ENCODE measurements at regions of chr20 and their contacts with region 1.

Region 1: DNA sequence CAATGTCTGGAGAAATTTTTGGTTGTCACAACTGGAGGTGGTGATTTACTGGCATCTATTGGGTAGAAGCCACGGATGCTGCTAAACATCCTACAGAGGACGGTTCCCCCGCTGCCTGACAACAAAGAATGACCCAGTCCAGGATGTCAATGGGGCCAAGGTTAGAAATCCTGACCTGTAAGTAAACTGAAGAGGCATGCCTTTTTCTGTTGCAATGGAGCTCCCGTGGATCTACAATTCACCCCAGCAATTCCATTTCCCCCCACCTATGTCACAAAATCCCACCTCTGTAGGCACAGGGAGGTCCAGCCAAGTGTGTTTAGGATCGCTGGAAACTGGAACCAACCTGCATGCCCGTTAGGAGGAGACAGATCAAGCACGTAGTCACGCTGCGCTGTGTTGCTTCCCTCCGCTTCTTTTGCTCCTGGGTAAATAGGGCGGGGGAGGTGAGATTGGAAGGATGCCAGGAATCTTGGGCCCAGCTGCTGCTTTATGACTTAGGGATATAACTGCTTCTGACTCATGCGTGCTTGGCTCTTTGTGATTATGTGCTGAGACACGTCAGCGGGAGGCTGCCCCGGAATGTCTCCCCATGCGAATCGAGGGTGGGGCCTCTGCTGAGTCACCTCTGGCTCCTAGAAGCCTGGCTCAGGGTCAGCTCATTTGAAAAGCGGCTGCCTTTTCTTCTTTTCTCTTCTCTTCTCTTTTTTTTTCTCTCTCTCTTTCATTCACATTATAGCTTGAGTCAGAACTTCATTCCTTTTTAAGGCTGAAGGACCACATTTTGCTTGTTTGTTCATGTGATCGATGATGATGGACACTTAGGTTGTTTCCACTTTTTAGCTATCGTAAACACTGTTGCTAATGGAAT is 12.4 kb upstream of the PEDS1 start:
- DNase-seq: peak; percentile 22 to 80 (median 72)
- ATAC-seq: peak; percentile 90
- H3K4me3 ChIP-seq: peak overlapping the region in 1 of 2 experiments; percentile 3
- H3K4me3 Mint-ChIP-seq: peak overlapping the region; percentile 50
- H3K27ac ChIP-seq: no peak overlapping the region
- H3K27ac Mint-ChIP-seq: no peak overlapping the region
- H3K4me1 ChIP-seq: peaks cover 8% of the 10 kb centered on the region
- H3K4me1 Mint-ChIP-seq: peaks cover 11% of the 10 kb centered on the region
- H3K27me3 ChIP-seq: no peaks in the 10 kb centered on the region
- H3K27me3 Mint-ChIP-seq: peaks cover 5% of the 10 kb centered on the region
- CTCF ChIP-seq: no peak

Region 2: DNA sequence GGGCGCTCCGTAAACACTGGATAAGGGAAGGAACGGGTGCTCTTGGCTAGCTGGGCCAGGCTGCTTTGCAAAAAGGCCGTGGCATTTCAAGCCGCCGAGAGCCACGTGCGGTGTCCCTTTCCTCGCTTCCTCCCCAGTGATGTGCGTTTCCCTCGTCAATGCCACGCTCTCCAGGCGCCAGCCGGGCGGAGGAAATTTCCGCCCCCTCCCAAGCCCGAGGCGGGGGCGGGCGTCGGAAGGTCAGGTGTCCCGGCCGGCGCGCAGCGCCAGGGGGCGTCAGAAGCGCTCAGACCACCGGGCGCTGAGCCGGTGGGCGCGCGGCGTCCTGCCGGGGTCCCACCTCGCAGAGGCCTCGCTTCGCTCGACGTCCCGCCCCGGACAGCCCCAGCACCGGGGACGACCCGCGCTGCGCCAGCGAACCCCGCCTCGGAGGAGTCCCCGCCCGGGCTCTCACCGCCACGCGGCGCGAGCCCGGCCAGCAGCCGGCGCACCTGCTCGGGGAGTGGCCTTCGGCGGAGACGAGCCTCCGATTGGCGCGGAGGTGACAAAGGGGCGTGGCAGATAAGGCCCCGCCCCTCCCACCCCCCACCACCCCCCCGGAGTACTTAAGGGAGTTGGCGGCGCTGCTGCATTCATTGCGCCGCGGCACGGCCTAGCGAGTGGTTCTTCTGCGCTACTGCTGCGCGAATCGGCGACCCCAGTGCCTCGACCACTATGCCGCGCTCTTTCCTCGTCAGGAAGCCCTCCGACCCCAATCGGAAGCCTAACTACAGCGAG is 183.4 kb before region 1 on chr20 and contains the start of gene SNAI1:
- CTCF ChIA-PET with region 1: interaction called, 39 read pairs
- POLR2A ChIA-PET with region 1: interaction called, 4 read pairs
- intact Hi-C with region 1: loop called (anchors 1 kb)
- DNase-seq: peak; percentile 65 to 94 (median 82)
- ATAC-seq: peak; percentile 92
- H3K4me3 ChIP-seq: peak within 1 kb of the TSS; percentile 35 to 51
- H3K4me3 Mint-ChIP-seq: peak within 1 kb of the TSS; percentile 72
- H3K27ac ChIP-seq: peak within 1 kb of the TSS in 1 of 2 experiments; percentile 51
- H3K27ac Mint-ChIP-seq: peak within 1 kb of the TSS; percentile 79
- H3K4me1 ChIP-seq: peaks cover 24% of the 10 kb centered on the region
- H3K4me1 Mint-ChIP-seq: peaks cover 28% of the 10 kb centered on the region
- H3K27me3 ChIP-seq: no peaks in the 10 kb centered on the region
- H3K27me3 Mint-ChIP-seq: no peaks in the 10 kb centered on the region
- CTCF ChIP-seq: peak; percentile 55
- total RNA-seq, gene SNAI1: 3.0 to 3.1 TPM

Region 3: DNA sequence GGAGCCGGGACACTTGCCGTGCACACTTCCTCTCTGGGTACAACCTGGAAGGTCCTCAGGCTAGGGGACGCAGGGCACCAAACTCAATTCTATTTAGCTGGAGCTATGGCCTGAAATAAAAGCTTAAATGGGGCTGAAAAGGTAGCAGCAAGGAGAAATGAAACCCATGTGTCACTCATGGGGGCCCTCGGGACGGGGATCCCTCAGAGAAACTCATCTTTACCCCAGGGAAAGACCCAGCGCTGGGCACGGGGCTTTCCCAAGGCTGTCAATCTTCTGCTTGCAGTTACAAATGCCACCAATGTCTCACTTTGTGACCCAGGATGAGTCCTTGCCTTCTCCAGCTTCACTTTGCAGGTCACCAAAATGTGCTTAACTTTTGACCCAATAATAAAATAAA is 166.6 kb before region 1 on chr20:
- CTCF ChIA-PET with region 1: no interaction called
- POLR2A ChIA-PET with region 1: no interaction called
- intact Hi-C with region 1: no loop called
- DNase-seq: peak in 1 of 9 experiments; percentile 37
- ATAC-seq: no peak
- H3K4me3 ChIP-seq: no peak overlapping the region
- H3K4me3 Mint-ChIP-seq: no peak overlapping the region
- H3K27ac ChIP-seq: no peak overlapping the region
- H3K27ac Mint-ChIP-seq: no peak overlapping the region
- H3K4me1 ChIP-seq: no peaks in the 10 kb centered on the region
- H3K4me1 Mint-ChIP-seq: no peaks in the 10 kb centered on the region
- H3K27me3 ChIP-seq: peaks cover 0 to 4% of the 10 kb centered on the region in 2 experiments
- H3K27me3 Mint-ChIP-seq: peaks cover 9% of the 10 kb centered on the region
- CTCF ChIP-seq: no peak

Region 4: DNA sequence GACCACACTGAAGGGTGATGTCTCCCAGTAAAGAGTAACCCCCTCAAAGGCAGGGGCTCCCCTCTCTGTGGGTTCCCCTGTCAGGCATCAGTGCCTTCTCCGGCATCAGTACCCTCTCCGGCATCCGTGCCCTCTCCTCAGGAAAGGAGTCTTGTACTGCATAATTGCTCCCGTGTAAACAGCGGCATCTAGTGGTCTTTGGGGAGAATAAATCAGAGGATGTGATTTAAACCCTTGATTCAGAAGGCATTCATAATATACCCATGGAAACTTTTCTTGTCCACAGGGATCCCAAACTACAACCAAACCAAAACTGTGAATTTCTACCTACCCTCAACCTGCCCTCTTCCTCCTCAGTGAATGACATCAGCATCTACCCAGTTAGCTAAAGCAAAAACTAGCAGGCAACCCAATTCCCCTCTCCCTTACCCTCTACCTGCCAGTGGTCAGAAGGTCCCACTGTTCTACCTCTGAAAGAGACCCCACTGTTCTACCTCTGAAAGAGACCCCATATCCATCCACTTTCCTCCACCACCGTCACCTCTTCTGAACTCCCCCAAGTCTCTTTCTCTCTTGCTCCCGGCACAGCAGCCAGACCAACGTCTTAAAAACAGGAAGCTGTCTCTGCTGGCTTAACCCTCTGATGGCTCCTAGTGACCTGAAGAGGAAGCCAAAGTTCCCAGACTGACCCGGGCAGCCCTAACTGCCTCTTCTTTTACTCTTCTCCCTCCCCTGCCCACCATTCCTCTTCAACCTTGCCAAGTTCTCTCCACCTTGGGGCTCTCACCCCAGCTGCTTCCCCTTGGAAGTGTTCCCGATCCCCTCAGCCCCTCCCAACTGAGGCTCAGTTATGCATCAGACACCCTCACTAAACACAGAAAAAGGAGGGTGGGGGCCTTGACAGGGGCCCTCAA is 80.2 kb before region 1 on chr20:
- CTCF ChIA-PET with region 1: interaction called, 12 read pairs
- POLR2A ChIA-PET with region 1: no interaction called
- intact Hi-C with region 1: no loop called
- DNase-seq: peak in 8 of 9 experiments; percentile 20 to 75 (median 38)
- ATAC-seq: peak; percentile 84
- H3K4me3 ChIP-seq: peak overlapping the region; percentile 29 to 38
- H3K4me3 Mint-ChIP-seq: peak overlapping the region; percentile 82
- H3K27ac ChIP-seq: peak overlapping the region; percentile 5 to 50
- H3K27ac Mint-ChIP-seq: peak overlapping the region; percentile 88
- H3K4me1 ChIP-seq: peaks cover 12% of the 10 kb centered on the region
- H3K4me1 Mint-ChIP-seq: peaks cover 35% of the 10 kb centered on the region
- H3K27me3 ChIP-seq: no peaks in the 10 kb centered on the region
- H3K27me3 Mint-ChIP-seq: no peaks in the 10 kb centered on the region
- CTCF ChIP-seq: peak; percentile 83

Region 5: GRCh38 chr20:50133474-50134217 is 32.3 kb before region 1 on chr20:
- CTCF ChIA-PET with region 1: interaction called, 14 read pairs
- POLR2A ChIA-PET with region 1: no interaction called
- intact Hi-C with region 1: no loop called
- DNase-seq: no peak
- ATAC-seq: no peak
- H3K4me3 ChIP-seq: no peak overlapping the region
- H3K4me3 Mint-ChIP-seq: no peak overlapping the region
- H3K27ac ChIP-seq: no peak overlapping the region
- H3K27ac Mint-ChIP-seq: peak overlapping the region; percentile 6
- H3K4me1 ChIP-seq: no peaks in the 10 kb centered on the region
- H3K4me1 Mint-ChIP-seq: peaks cover 5% of the 10 kb centered on the region
- H3K27me3 ChIP-seq: no peaks in the 10 kb centered on the region
- H3K27me3 Mint-ChIP-seq: no peaks in the 10 kb centered on the region
- CTCF ChIP-seq: no peak

Region 6: DNA sequence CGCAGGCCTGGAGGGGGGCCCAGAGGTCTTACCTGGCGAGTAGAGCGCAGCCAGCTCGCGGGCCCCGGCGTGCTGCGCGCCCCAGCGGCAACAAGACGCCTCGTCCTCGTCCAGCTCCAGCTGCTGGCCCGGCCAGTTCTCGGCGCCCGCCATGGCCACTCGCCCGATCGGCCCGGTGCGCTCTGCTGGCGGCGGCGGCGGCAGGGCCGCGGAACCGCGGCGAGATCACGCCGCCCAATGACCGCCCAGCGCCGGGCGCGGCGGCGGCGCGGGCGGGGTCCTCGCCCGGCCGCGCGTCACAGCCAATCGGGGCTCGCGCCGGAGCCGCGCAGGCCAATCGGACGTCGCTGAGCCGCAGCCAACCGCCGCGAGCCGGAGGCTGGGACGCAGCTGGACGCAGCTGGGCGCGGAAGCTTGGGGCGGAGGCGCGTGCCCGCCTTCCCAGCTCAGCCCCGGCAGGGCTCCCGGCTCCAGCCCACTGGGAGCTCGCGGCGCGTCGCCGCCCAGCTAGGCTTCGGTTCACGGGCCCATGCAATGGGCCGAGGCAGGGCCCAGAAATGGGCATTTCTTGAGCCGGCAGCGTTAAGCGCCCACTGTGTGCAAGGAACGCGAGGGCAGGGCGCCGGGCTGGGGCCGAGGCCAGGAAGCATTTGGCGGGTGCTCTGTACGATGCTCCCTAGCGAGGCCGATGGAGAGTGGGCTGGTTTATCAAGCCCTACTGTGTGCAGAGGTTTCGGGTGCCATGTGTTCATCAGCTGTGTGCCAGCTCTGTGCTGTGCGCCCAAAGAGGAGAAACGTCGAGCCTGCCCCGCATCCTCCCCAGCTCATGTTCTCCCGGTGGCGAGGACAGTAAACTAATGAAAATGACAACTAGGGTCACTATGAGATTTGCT is 12.2 kb before region 1 on chr20 and contains the start of gene PEDS1:
- CTCF ChIA-PET with region 1: interaction called, 103 read pairs
- POLR2A ChIA-PET with region 1: interaction called, 11 read pairs
- intact Hi-C with region 1: no loop called
- DNase-seq: peak; percentile 55 to 92 (median 80)
- ATAC-seq: peak; percentile 93
- H3K4me3 ChIP-seq: peak within 1 kb of the TSS; percentile 89 to 92
- H3K4me3 Mint-ChIP-seq: peak within 1 kb of the TSS; percentile 90
- H3K27ac ChIP-seq: peak within 1 kb of the TSS; percentile 77 to 78
- H3K27ac Mint-ChIP-seq: peak within 1 kb of the TSS; percentile 91
- H3K4me1 ChIP-seq: peaks cover 36% of the 10 kb centered on the region
- H3K4me1 Mint-ChIP-seq: peaks cover 43% of the 10 kb centered on the region
- H3K27me3 ChIP-seq: no peaks in the 10 kb centered on the region
- H3K27me3 Mint-ChIP-seq: no peaks in the 10 kb centered on the region
- CTCF ChIP-seq: no peak
- total RNA-seq, gene PEDS1: 19.0 to 20.8 TPM

Region 7: DNA sequence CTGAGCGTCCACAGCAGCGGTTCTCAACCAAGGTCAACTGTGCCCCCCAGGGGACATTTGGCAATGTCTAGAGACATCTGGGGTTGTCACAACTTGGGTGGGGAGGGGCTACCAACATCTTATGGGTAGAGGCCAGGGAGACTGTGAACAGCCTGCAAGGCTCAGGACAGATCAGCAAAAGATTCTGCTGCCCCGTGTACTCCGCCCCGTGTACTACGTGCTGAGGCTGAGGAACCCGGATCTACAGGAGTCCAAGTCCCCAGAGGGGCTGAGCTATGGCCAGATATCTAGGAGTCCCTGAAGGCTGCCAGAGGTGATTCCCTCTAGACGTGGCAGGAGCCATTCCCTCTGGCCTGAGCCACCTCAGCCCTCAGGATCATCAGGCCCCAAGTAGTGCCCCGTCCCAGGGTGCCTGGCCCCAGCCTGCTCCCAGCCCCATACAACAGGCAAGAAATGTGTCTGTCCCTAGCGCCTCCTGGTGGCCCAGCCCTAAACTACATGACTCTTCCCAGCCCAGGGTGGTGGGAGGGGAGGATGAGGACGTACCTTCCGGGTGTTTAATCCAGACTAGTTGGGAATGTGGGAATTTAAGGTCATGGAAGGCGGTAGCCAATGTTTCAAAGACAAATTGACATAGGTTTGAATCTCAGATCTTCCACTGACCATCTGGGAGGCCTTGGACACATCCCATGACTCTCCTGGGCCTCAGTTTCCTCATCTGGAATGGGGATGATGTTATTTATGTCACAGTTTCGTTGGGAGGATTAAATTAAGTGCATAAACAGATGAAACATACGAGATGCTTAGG is 294.7 kb after region 1 on chr20:
- CTCF ChIA-PET with region 1: interaction called, 16 read pairs
- POLR2A ChIA-PET with region 1: no interaction called
- intact Hi-C with region 1: no loop called
- DNase-seq: peak; percentile 65 to 85 (median 81)
- ATAC-seq: peak; percentile 91
- H3K4me3 ChIP-seq: no peak overlapping the region
- H3K4me3 Mint-ChIP-seq: no peak overlapping the region
- H3K27ac ChIP-seq: no peak overlapping the region
- H3K27ac Mint-ChIP-seq: no peak overlapping the region
- H3K4me1 ChIP-seq: peaks cover 3% of the 10 kb centered on the region
- H3K4me1 Mint-ChIP-seq: peaks cover 4% of the 10 kb centered on the region
- H3K27me3 ChIP-seq: peaks cover 0 to 5% of the 10 kb centered on the region in 2 experiments
- H3K27me3 Mint-ChIP-seq: peaks cover 12% of the 10 kb centered on the region
- CTCF ChIP-seq: peak; percentile 72